Mammary epithelial cell (primary cell): ENCODE measurements at regions of chr1 and their contacts with region 1.

Region 1: GRCh38 chr1:206808615-206809014 is 36.3 kb upstream of the IL10 start:
- DNase-seq: no peak
- H3K4me3 ChIP-seq: no peak overlapping the region
- H3K27ac ChIP-seq: no peak overlapping the region
- H3K4me1 ChIP-seq: peaks cover 7% of the 10 kb centered on the region
- H3K27me3 ChIP-seq: no peaks in the 10 kb centered on the region
- CTCF ChIP-seq: peak; percentile 15 to 52

Region 2: GRCh38 chr1:206725109-206725963 is 83.3 kb before region 1 on chr1:
- CTCF ChIA-PET with region 1: no interaction called
- dilution Hi-C with region 1: no loop called
- in situ Hi-C with region 1: no loop called
- intact Hi-C with region 1: loop called (anchors 2 kb)
- DNase-seq: no peak
- H3K4me3 ChIP-seq: no peak overlapping the region
- H3K27ac ChIP-seq: no peak overlapping the region
- H3K4me1 ChIP-seq: peaks cover 19% of the 10 kb centered on the region
- H3K27me3 ChIP-seq: no peaks in the 10 kb centered on the region
- CTCF ChIP-seq: peak; percentile 62 to 68

Region 3: DNA sequence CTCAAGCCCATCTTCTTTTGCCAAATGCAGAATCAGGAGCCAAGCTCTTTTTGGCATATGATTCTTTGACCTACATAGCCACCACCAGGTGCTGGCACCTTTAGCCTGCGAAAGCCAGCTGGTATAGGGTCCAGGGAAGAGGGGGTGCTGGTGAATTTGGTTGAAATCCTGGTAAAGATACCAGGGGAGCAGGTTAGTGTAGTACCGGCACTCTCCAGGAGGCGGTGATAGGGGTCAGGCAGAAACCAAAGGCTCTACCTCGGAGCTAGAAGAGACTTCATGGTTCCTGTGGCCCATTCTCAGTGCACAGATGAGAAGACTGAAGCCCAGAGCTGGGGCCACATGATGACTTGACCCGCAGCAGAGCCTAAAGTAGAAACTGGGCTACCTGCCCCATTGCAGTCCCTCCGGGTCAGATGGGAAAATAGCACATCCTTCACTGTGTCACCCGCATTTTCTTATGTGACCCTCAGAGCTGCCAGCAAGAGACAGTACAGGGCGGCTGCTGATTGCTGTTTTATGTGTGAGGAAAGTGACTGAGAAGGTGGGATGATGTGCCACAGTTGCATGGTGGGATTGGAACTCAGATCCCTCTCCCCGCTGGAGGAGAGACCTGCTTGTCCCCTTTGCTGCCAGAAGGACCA is 74.0 kb before region 1 on chr1:
- CTCF ChIA-PET with region 1: no interaction called
- dilution Hi-C with region 1: no loop called
- in situ Hi-C with region 1: no loop called
- intact Hi-C with region 1: loop called (anchors 2 kb)
- DNase-seq: no peak
- H3K4me3 ChIP-seq: no peak overlapping the region
- H3K27ac ChIP-seq: no peak overlapping the region
- H3K4me1 ChIP-seq: peaks cover 4% of the 10 kb centered on the region
- H3K27me3 ChIP-seq: no peaks in the 10 kb centered on the region
- CTCF ChIP-seq: peak; percentile 79 to 87

Region 4: GRCh38 chr1:206847946-206848345 is 39.3 kb after region 1 on chr1:
- CTCF ChIA-PET with region 1: interaction called, 3 read pairs
- dilution Hi-C with region 1: loop called (anchors 5 kb)
- in situ Hi-C with region 1: no loop called
- intact Hi-C with region 1: loop called (anchors 1 kb)
- DNase-seq: peak; percentile 47
- H3K4me3 ChIP-seq: no peak overlapping the region
- H3K27ac ChIP-seq: no peak overlapping the region
- H3K4me1 ChIP-seq: peaks cover 12% of the 10 kb centered on the region
- H3K27me3 ChIP-seq: no peaks in the 10 kb centered on the region
- CTCF ChIP-seq: no peak